ENCODE measurements at regions of chr14 and their contacts with region 1.

Region 1: DNA sequence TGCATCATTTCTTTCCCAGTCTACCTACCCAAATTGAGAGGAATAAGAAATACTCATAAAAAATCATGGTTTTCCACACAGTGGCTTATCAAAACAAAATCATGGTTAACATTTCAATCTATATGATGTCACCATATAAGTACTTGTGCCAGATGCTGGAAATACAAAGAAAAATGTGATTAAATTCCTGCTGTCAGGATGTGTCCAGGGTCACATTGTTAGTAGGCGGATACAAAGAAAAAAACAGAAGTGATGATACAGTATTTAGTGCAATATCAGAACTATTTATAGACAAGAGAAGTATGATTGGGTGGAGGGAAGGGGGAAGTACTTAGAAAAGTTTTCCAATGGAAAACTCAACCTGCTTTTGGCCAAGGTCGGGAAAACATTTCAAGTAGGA is 47.0 kb upstream of the OR6J1 start:
- DNase-seq: peak in 1 of 2 donors; percentile 14
- H3K4me3 ChIP-seq: no peak overlapping the region
- H3K27ac ChIP-seq: no peak overlapping the region
- H3K4me1 ChIP-seq: no peaks in the 10 kb centered on the region
- H3K27me3 ChIP-seq: no peaks in the 10 kb centered on the region
- CTCF ChIP-seq: no peak
- EP300 ChIP-seq: no peak
- POLR2A ChIP-seq: no peak

Region 2: DNA sequence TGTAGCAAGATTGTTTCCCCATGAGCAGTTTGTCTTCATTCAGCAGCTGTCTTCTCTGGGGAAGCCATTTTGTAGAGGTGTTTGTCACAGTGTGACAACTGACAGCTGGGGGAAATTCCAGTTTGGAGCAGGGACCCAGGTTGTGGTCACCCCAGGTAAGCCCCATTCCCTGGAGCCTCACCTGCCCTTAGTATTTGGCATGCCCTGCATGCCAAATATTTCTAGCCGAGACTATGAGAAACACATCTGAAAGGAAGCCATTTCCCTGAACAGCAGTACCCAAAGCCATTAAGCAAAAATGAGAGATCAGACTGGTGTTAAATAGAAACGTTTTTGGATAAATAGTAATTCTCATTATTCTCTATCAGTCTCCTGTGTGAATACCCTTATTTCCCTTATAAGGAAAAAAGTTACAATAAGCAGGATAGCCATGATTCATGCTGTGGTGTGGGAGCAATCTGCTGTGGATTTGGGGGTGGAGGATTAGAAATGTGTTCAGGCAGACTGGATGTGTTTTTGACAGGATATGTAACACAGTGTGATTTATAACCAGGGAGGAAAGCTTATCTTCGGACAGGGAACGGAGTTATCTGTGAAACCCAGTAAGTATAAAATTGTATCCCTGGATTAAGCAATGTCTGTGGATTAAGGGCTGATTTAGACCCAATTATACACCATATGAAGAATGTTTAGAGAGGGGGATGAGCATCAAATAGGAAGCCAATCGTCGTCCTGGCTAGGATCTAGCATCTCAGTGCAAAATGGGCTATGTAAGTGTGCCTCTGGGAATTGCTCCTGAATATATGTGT is 171.1 kb before region 1 on chr14:
- intact Hi-C with region 1: no loop called
- DNase-seq: peak in 1 of 2 donors; percentile 47
- H3K4me3 ChIP-seq: no peak overlapping the region
- H3K27ac ChIP-seq: peak overlapping the region in 4 of 5 donors; percentile 60 to 74 (median 66)
- H3K4me1 ChIP-seq: peaks cover 18 to 75% (median 50%) of the 10 kb centered on the region in 4 donors
- H3K27me3 ChIP-seq: no peaks in the 10 kb centered on the region
- CTCF ChIP-seq: no peak
- EP300 ChIP-seq: no peak
- POLR2A ChIP-seq: no peak

Region 3: DNA sequence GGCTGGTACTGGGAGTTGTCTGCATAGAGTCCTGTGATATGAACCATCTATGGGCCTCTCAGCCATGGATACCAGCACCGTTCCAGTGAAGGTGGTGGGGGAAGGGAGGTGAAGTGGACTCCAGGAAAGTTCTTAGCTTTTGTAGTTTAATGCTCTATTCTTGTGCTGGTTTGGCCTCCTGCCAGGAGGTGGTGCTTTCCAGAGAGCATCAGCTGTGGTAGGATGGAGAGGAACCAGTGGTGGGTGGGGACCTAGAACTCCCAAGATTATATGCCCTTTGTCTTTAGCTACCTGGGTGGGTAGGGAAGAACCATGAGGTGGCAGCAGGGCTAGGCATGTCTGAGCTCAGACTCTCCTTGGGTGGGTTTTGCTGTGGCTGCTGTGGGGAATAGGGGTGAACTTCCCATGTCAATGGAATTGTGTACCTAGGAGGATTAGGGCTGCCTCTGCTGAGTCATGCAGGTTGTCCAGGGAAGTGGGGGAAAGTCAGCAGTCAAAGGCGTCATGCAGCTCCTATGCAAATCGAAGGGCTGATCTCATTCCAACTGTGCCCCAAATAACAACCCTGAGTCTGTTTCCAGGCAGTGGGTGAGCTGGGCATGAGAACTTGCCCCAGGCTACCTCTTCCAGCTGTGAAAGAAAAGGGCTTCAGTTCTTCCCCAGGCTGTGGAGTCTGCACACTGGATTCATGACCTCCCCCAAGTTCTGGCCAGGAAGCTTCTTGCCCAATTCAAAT is 1904.1 kb after region 1 on chr14:
- intact Hi-C with region 1: loop called (anchors 10 kb)
- DNase-seq: no peak
- H3K4me3 ChIP-seq: no peak overlapping the region
- H3K27ac ChIP-seq: no peak overlapping the region
- H3K4me1 ChIP-seq: no peaks in the 10 kb centered on the region
- H3K27me3 ChIP-seq: no peaks in the 10 kb centered on the region
- CTCF ChIP-seq: no peak
- EP300 ChIP-seq: no peak
- POLR2A ChIP-seq: no peak